ENCODE measurements at regions of chr22 and their contacts with region 1.

Region 1: DNA sequence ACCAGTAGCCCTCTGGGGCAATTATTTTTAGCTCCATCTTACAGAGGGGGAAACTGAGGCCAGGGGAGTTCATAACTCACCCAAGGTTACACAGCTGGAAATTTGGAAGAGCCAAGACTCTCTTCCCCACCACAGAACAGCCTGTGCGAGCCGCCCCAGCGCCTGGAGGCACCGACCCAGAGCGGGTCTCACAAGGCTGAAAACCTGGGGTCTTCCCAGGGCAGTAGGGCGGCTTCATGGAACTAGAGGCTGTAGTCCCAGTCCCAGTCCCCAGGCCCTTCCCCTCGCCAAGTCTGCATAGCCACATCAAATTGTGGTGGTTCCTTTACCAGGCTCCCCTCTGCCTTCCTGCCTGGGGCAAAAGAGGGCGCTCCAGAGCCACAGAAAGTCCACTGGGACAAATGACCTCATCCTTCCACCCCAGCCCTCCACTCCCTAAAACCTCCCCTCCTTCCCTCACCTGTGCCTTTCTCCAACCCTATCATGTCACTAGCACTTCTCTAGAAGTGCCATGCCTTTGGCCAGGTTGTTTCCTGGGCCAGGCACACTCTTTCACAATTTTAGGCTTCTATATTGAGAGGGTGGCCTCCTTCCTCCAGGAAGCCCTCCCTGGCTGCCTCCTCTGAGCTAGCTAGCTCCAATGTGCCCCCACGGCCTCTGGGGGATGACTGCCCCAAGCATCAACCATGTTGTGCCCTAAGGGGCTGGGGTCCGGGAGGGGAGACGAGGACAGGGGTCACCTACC is 15.2 kb upstream of the CDC42EP1 start:
- DNase-seq: peak in 8 of 9 experiments; percentile 30 to 66 (median 53)
- ATAC-seq: peak; percentile 54
- H3K4me3 ChIP-seq: no peak overlapping the region
- H3K4me3 Mint-ChIP-seq: no peak overlapping the region
- H3K27ac ChIP-seq: no peak overlapping the region
- H3K27ac Mint-ChIP-seq: no peak overlapping the region
- H3K4me1 ChIP-seq: peaks cover 14% of the 10 kb centered on the region
- H3K4me1 Mint-ChIP-seq: peaks cover 8% of the 10 kb centered on the region
- H3K27me3 ChIP-seq: peaks cover 0 to 5% of the 10 kb centered on the region in 2 experiments
- H3K27me3 Mint-ChIP-seq: peaks cover 27% of the 10 kb centered on the region
- CTCF ChIP-seq: peak; percentile 50

Region 2: DNA sequence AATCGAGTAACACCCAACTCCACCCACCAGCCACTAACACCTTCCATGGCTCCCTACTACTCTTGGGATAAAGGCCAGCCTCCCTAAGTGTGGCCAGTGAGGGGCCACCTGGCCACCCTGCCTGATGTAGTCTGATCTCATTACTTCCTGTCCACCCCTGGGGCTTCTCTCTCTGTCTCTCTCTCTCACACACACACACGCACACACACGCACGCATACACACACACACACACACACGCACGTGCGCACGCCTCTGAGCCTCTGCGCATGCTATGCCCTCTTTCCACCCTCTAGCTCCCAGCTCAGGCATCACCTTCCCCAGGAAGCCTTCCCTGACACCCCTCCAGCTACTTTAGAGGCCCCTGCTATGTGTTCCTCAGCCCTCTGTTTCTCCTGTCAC is 62.9 kb before region 1 on chr22:
- CTCF ChIA-PET with region 1: no interaction called
- POLR2A ChIA-PET with region 1: no interaction called
- intact Hi-C with region 1: no loop called
- DNase-seq: peak in 1 of 9 experiments; percentile 33
- ATAC-seq: no peak
- H3K4me3 ChIP-seq: no peak overlapping the region
- H3K4me3 Mint-ChIP-seq: peak overlapping the region; percentile 94
- H3K27ac ChIP-seq: peak overlapping the region in 1 of 2 experiments; percentile 8
- H3K27ac Mint-ChIP-seq: peak overlapping the region; percentile 98
- H3K4me1 ChIP-seq: peaks cover 42% of the 10 kb centered on the region
- H3K4me1 Mint-ChIP-seq: peaks cover 54% of the 10 kb centered on the region
- H3K27me3 ChIP-seq: no peaks in the 10 kb centered on the region
- H3K27me3 Mint-ChIP-seq: no peaks in the 10 kb centered on the region
- CTCF ChIP-seq: no peak

Region 3: DNA sequence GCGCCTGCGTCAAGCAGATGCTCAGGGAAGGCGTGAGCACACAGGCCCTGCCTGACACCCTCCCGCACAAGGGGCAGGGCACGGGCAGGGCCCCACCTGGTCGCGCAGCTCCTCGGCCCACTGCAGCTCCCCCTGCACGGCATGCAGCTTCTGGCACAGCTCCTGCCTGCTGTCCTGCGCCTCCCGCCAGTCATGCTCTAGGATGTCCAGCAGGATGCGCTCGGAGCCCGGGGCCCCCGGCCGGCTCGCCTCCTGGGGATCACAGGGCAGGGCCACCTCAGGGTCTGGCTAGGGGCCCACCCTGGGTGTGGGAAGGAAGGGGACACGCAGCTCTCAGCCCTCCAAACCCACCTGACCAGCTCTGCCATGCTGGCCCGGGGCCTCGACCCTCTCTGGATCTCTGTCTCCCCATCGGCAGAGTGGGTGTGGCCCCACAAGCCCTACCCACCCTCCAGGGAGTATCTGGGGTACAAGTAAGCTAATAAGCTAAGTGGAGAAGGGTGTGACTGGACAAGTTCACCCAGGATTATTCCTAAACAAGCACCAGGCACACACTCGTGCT is 36.6 kb before region 1 on chr22:
- CTCF ChIA-PET with region 1: no interaction called
- POLR2A ChIA-PET with region 1: no interaction called
- intact Hi-C with region 1: no loop called
- DNase-seq: no peak
- ATAC-seq: no peak
- H3K4me3 ChIP-seq: no peak overlapping the region
- H3K4me3 Mint-ChIP-seq: no peak overlapping the region
- H3K27ac ChIP-seq: no peak overlapping the region
- H3K27ac Mint-ChIP-seq: no peak overlapping the region
- H3K4me1 ChIP-seq: no peaks in the 10 kb centered on the region
- H3K4me1 Mint-ChIP-seq: no peaks in the 10 kb centered on the region
- H3K27me3 ChIP-seq: no peaks in the 10 kb centered on the region
- H3K27me3 Mint-ChIP-seq: no peaks in the 10 kb centered on the region
- CTCF ChIP-seq: no peak

Region 4: DNA sequence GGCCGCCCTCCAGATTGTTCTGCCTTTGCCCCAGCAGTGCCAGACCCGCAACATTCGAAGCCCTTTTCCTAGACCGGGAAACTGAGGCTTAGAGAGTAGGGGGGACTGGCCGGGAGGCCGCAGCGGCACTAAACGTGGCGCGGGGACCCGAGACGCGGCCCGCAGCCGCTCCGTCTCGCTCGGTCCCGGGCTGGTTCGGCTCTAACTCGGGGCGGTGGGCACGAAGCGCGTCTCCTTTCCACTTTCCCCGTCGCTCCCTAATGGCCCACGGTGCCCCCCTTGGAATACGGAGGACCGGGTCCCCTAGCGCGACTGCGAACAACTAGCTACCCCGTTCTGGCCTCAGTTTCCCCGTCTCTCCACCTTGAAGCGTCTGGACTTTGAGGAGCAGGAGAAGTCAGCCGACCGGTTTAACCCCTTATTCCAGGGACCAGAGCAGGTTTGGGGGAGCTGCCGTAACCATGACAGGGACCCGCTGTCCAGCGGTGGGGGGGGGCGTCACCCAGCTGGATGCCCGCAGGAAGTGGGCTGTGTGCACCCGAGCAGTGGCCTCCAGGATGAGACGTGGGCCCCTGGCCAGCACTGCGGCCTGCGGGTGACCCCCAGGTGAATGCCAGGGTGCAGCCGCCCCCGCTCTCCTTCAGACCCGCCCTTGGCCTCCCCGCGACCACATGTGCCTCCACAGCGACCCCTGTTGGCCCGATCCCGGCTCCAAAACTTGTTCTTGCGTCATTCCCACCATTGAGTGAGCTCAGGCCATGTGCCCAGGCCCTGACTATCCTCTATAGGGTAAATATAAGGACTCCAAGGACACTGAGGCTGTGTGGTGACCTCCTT is 16.3 kb after region 1 on chr22:
- CTCF ChIA-PET with region 1: interaction called, 540 read pairs
- POLR2A ChIA-PET with region 1: interaction called, 32 read pairs
- intact Hi-C with region 1: loop called in 1 of 2 experiments (anchors 1 kb)
- DNase-seq: peak; percentile 65 to 84 (median 78)
- ATAC-seq: peak; percentile 69
- H3K4me3 ChIP-seq: peak overlapping the region; percentile 12 to 22
- H3K4me3 Mint-ChIP-seq: peak overlapping the region; percentile 74
- H3K27ac ChIP-seq: no peak overlapping the region
- H3K27ac Mint-ChIP-seq: no peak overlapping the region
- H3K4me1 ChIP-seq: peaks cover 28% of the 10 kb centered on the region
- H3K4me1 Mint-ChIP-seq: peaks cover 23% of the 10 kb centered on the region
- H3K27me3 ChIP-seq: peaks cover 13 to 24% of the 10 kb centered on the region in 2 experiments
- H3K27me3 Mint-ChIP-seq: peaks cover 24% of the 10 kb centered on the region
- CTCF ChIP-seq: peak; percentile 73

Region 5: DNA sequence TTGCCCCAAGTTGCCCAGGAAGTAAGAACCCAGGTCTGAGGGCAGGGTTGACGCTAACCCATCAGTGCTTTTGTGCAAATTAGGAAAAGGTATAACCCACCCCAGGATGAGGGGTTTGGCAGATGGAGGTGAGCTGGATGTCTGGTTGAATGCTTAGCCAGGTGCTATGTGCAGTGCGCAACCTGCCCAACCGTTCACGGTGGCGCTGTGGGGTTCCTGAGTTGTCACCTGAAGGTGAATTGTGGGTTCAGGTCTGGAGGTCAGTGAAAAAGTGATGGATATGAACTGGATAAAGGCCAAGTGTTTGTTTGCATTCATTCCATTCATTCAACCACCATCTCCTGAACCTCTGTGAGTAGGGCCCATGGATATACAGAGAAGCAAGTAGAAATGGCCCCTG is 49.1 kb after region 1 on chr22:
- CTCF ChIA-PET with region 1: interaction called, 30 read pairs
- POLR2A ChIA-PET with region 1: interaction called, 3 read pairs
- intact Hi-C with region 1: no loop called
- DNase-seq: no peak
- ATAC-seq: no peak
- H3K4me3 ChIP-seq: no peak overlapping the region
- H3K4me3 Mint-ChIP-seq: no peak overlapping the region
- H3K27ac ChIP-seq: no peak overlapping the region
- H3K27ac Mint-ChIP-seq: no peak overlapping the region
- H3K4me1 ChIP-seq: peaks cover 6% of the 10 kb centered on the region
- H3K4me1 Mint-ChIP-seq: peaks cover 12% of the 10 kb centered on the region
- H3K27me3 ChIP-seq: no peaks in the 10 kb centered on the region
- H3K27me3 Mint-ChIP-seq: no peaks in the 10 kb centered on the region
- CTCF ChIP-seq: no peak

Measured in CD8-positive, alpha-beta T cell (primary cell).